Naive thymus-derived CD4-positive, alpha-beta T cell (primary cell): ENCODE measurements at regions of chrX and their contacts with region 1.

Region 1: GRCh38 chrX:155637714-155638113 is 25.0 kb upstream of the TMLHE start:
- DNase-seq: no peak
- ATAC-seq: no peak
- H3K4me3 ChIP-seq: no peak overlapping the region
- H3K4me3 Mint-ChIP-seq: no peak overlapping the region
- H3K27ac ChIP-seq: no peak overlapping the region
- H3K27ac Mint-ChIP-seq: peak overlapping the region in 1 of 9 donors; percentile 40
- H3K4me1 ChIP-seq: no peaks in the 10 kb centered on the region
- H3K4me1 Mint-ChIP-seq: peaks cover 0 to 14% (median 7%) of the 10 kb centered on the region in 7 donors
- H3K27me3 ChIP-seq: no peaks in the 10 kb centered on the region
- H3K27me3 Mint-ChIP-seq: peaks cover 0 to 5% (median 0%) of the 10 kb centered on the region in 5 donors

Region 2: GRCh38 chrX:155592981-155593380 is 44.7 kb before region 1 on chrX:
- CTCF ChIA-PET with region 1: no interaction called
- POLR2A ChIA-PET with region 1: no interaction called
- intact Hi-C with region 1: loop called in 1 of 2 experiments (anchors 5 kb)
- DNase-seq: no peak
- ATAC-seq: no peak
- H3K4me3 ChIP-seq: no peak overlapping the region
- H3K4me3 Mint-ChIP-seq: no peak overlapping the region
- H3K27ac ChIP-seq: no peak overlapping the region
- H3K27ac Mint-ChIP-seq: no peak overlapping the region
- H3K4me1 ChIP-seq: no peaks in the 10 kb centered on the region
- H3K4me1 Mint-ChIP-seq: no peaks in the 10 kb centered on the region
- H3K27me3 ChIP-seq: no peaks in the 10 kb centered on the region
- H3K27me3 Mint-ChIP-seq: no peaks in the 10 kb centered on the region